ENCODE measurements at regions of chr4 and their contacts with region 1.

Region 1: GRCh38 chr4:140829825-140830224 is 73.6 kb upstream of the TBC1D9 start:
- DNase-seq: no peak
- H3K4me3 ChIP-seq: no peak overlapping the region
- H3K27ac ChIP-seq: no peak overlapping the region
- H3K4me1 ChIP-seq: peaks cover 0 to 5% (median 2%) of the 10 kb centered on the region in 4 donors
- H3K27me3 ChIP-seq: no peaks in the 10 kb centered on the region
- CTCF ChIP-seq: no peak
- EP300 ChIP-seq: no peak
- POLR2A ChIP-seq: no peak

Region 2: DNA sequence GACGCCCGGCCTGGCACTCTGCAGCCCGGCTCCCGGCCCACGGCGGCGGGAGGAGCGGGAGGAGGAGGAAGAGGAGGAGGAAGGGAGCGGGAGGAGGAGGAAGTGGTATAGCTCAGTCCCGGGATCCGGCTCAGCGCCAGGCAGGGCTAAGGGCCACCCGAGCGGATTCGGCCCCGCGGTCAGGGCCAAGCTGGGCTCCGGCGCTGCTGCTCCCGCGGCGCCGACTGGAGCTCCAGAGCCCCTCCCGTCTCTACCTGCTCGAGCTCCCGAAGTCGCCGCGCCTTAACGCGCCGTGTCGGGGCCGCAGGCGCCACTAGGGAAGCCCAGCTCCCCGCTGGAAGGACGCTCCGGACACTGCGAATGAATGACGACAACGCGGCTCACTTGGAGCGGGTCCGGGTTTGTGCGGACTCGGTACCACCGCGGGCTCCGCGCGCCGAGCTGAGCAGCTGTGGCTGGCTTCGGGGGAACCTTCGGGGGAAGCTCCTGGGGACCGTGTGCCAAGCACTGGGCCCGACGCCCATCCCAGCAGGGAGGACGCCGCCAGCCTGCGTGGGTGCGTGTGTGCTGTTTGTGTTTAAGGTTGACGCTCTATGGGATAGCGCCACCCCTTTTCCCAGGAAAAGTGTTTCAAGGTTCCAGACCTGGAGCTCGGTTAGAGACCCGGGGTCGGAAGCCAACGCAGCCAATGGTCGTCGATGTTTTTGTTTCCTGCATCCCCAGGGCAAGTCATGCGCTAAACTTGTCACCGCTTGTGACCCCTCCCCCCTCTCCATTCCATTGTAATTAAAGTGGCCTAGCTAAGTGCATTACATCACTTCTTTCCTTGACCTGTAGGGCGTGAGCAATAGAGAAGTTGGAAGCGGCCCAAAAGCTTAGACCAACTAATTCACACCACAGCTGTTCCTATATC is 73.2 kb before region 1 on chr4 and contains the start of gene TBC1D9:
- intact Hi-C with region 1: loop called (anchors 10 kb)
- DNase-seq: peak; percentile 86
- H3K4me3 ChIP-seq: peak within 1 kb of the TSS; percentile 60 to 94 (median 76)
- H3K27ac ChIP-seq: peak within 1 kb of the TSS; percentile 82 to 98 (median 86)
- H3K4me1 ChIP-seq: peaks cover 0 to 15% (median 6%) of the 10 kb centered on the region in 4 donors
- H3K27me3 ChIP-seq: no peaks in the 10 kb centered on the region
- CTCF ChIP-seq: peak in 1 of 4 experiments; percentile 8
- EP300 ChIP-seq: peak in 1 of 4 donors; percentile 16
- POLR2A ChIP-seq: no peak
- total RNA-seq, gene TBC1D9: 7.9 to 10.2 (median 9.6) TPM

Measured in sigmoid colon (tissue), 7 donors.